B cell (primary cell): ENCODE measurements at regions of chr12 and their contacts with region 1.

Region 1: GRCh38 chr12:110280779-110281548 is at the start of gene ATP2A2:
- DNase-seq: peak; percentile 96
- ATAC-seq: peak; percentile 86
- H3K4me3 ChIP-seq: peak within 1 kb of the TSS; percentile 75 to 91 (median 88)
- H3K4me3 Mint-ChIP-seq: peak within 1 kb of the TSS; percentile 98
- H3K27ac ChIP-seq: peak within 1 kb of the TSS; percentile 63 to 84
- H3K27ac Mint-ChIP-seq: peak within 1 kb of the TSS; percentile 97
- H3K4me1 ChIP-seq: peaks cover 26 to 38% of the 10 kb centered on the region in 2 donors
- H3K4me1 Mint-ChIP-seq: peaks cover 45% of the 10 kb centered on the region
- H3K27me3 ChIP-seq: no peaks in the 10 kb centered on the region
- H3K27me3 Mint-ChIP-seq: no peaks in the 10 kb centered on the region
- CTCF ChIP-seq: peak; percentile 10
- total RNA-seq, gene ATP2A2: 68.2 and 73.1 TPM in 2 replicates

Region 2: GRCh38 chr12:109899783-109900751 is 380.9 kb before region 1 on chr12 and contains the start of gene TCHP:
- CTCF ChIA-PET with region 1: no interaction called
- POLR2A ChIA-PET with region 1: no interaction called
- intact Hi-C with region 1: loop called (anchors 5 kb)
- DNase-seq: peak; percentile 88
- ATAC-seq: peak; percentile 92
- H3K4me3 ChIP-seq: peak within 1 kb of the TSS; percentile 66 to 83 (median 70)
- H3K4me3 Mint-ChIP-seq: peak within 1 kb of the TSS; percentile 92
- H3K27ac ChIP-seq: peak within 1 kb of the TSS; percentile 49 to 74
- H3K27ac Mint-ChIP-seq: peak within 1 kb of the TSS; percentile 96
- H3K4me1 ChIP-seq: peaks cover 13 to 24% of the 10 kb centered on the region in 2 donors
- H3K4me1 Mint-ChIP-seq: peaks cover 22% of the 10 kb centered on the region
- H3K27me3 ChIP-seq: no peaks in the 10 kb centered on the region
- H3K27me3 Mint-ChIP-seq: no peaks in the 10 kb centered on the region
- CTCF ChIP-seq: no peak
- total RNA-seq, gene TCHP: 29.4 and 35.8 TPM in 2 replicates

Region 3: DNA sequence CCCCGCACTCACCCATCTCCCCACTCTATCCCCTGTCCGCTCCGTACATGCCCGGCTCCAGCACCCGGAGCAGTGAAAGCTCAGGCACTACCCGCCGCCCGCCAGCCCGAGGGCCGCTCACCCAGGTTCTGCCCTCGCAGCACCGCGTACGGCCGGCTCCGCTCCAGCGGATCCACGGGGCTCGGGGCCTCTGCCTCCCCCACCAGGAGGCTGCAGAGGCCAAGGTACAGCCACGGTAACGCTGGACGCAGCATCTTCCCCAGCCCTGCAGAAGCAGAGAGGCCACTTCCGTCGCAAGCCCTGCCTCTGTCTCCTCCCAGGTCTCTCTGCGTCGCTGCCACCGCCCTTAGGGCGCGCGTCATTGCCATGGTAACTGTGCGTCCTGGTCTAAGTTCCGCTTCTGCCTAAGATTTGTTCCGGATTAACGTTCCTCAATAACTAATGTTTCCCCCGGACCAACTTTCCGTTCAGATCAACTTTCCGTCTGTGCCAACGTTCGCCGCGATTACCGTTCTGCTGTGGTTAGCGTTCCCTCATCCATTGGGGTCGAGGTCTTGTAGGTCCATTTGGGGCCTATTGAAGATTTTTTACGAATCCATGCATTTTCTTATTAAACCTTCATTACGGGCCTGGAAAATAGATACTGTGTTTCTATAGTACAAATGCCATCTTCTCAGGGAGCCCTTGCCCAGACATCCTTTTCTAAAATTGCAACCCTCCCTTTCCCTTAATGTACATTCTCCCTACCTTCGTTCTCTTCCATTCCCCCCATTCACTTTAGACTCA is 232.5 kb before region 1 on chr12 and contains the start of gene C12orf76:
- CTCF ChIA-PET with region 1: no interaction called
- POLR2A ChIA-PET with region 1: no interaction called
- intact Hi-C with region 1: loop called (anchors 1 kb)
- DNase-seq: peak; percentile 96
- ATAC-seq: peak; percentile 98
- H3K4me3 ChIP-seq: peak within 1 kb of the TSS; percentile 66 to 95 (median 74)
- H3K4me3 Mint-ChIP-seq: peak within 1 kb of the TSS; percentile 91
- H3K27ac ChIP-seq: peak within 1 kb of the TSS; percentile 86 to 89
- H3K27ac Mint-ChIP-seq: peak within 1 kb of the TSS; percentile 98
- H3K4me1 ChIP-seq: peaks cover 23 to 44% of the 10 kb centered on the region in 2 donors
- H3K4me1 Mint-ChIP-seq: peaks cover 44% of the 10 kb centered on the region
- H3K27me3 ChIP-seq: no peaks in the 10 kb centered on the region
- H3K27me3 Mint-ChIP-seq: no peaks in the 10 kb centered on the region
- CTCF ChIP-seq: no peak
- total RNA-seq, gene C12orf76: 26.2 and 28.5 TPM in 2 replicates

Region 4: GRCh38 chr12:110124184-110124995 is 156.6 kb before region 1 on chr12 and contains the start of gene IFT81:
- CTCF ChIA-PET with region 1: interaction called, 6 read pairs
- POLR2A ChIA-PET with region 1: no interaction called
- intact Hi-C with region 1: loop called (anchors 1 kb)
- DNase-seq: peak; percentile 96
- ATAC-seq: peak; percentile 94
- H3K4me3 ChIP-seq: peak within 1 kb of the TSS; percentile 75 to 98 (median 96)
- H3K4me3 Mint-ChIP-seq: peak within 1 kb of the TSS; percentile 94
- H3K27ac ChIP-seq: peak within 1 kb of the TSS; percentile 25 to 92
- H3K27ac Mint-ChIP-seq: peak within 1 kb of the TSS; percentile 92
- H3K4me1 ChIP-seq: peaks cover 7 to 8% of the 10 kb centered on the region in 2 donors
- H3K4me1 Mint-ChIP-seq: peaks cover 9% of the 10 kb centered on the region
- H3K27me3 ChIP-seq: no peaks in the 10 kb centered on the region
- H3K27me3 Mint-ChIP-seq: no peaks in the 10 kb centered on the region
- CTCF ChIP-seq: no peak
- total RNA-seq, gene IFT81: 6.0 and 6.8 TPM in 2 replicates

Region 5: GRCh38 chr12:110134691-110135411 is 146.1 kb before region 1 on chr12:
- CTCF ChIA-PET with region 1: no interaction called
- POLR2A ChIA-PET with region 1: no interaction called
- intact Hi-C with region 1: no loop called
- DNase-seq: peak; percentile 33
- ATAC-seq: peak; percentile 73
- H3K4me3 ChIP-seq: no peak overlapping the region
- H3K4me3 Mint-ChIP-seq: no peak overlapping the region
- H3K27ac ChIP-seq: peak overlapping the region in 1 of 2 donors; percentile 28
- H3K27ac Mint-ChIP-seq: peak overlapping the region; percentile 32
- H3K4me1 ChIP-seq: peaks cover 4 to 6% of the 10 kb centered on the region in 2 donors
- H3K4me1 Mint-ChIP-seq: peaks cover 13% of the 10 kb centered on the region
- H3K27me3 ChIP-seq: no peaks in the 10 kb centered on the region
- H3K27me3 Mint-ChIP-seq: no peaks in the 10 kb centered on the region
- CTCF ChIP-seq: no peak

Region 6: GRCh38 chr12:110245369-110245772 is 35.6 kb before region 1 on chr12:
- CTCF ChIA-PET with region 1: no interaction called
- POLR2A ChIA-PET with region 1: no interaction called
- intact Hi-C with region 1: no loop called
- DNase-seq: peak; percentile 59
- ATAC-seq: peak; percentile 65
- H3K4me3 ChIP-seq: no peak overlapping the region
- H3K4me3 Mint-ChIP-seq: no peak overlapping the region
- H3K27ac ChIP-seq: no peak overlapping the region
- H3K27ac Mint-ChIP-seq: no peak overlapping the region
- H3K4me1 ChIP-seq: peaks cover 0 to 5% of the 10 kb centered on the region in 2 donors
- H3K4me1 Mint-ChIP-seq: peaks cover 7% of the 10 kb centered on the region
- H3K27me3 ChIP-seq: no peaks in the 10 kb centered on the region
- H3K27me3 Mint-ChIP-seq: peaks cover 9% of the 10 kb centered on the region
- CTCF ChIP-seq: peak; percentile 65

Region 7: GRCh38 chr12:110501752-110502738 is 221.1 kb after region 1 on chr12 and contains the starts of genes RAD9B and VPS29:
- CTCF ChIA-PET with region 1: no interaction called
- POLR2A ChIA-PET with region 1: no interaction called
- intact Hi-C with region 1: loop called (anchors 5 kb)
- DNase-seq: peak; percentile 99
- ATAC-seq: peak; percentile 94
- H3K4me3 ChIP-seq: peak within 1 kb of the TSS; percentile 90 to 99 (median 95)
- H3K4me3 Mint-ChIP-seq: peak within 1 kb of the TSS; percentile 93
- H3K27ac ChIP-seq: peak within 1 kb of the TSS; percentile 85 to 90
- H3K27ac Mint-ChIP-seq: peak within 1 kb of the TSS; percentile 96
- H3K4me1 ChIP-seq: peaks cover 19 to 20% of the 10 kb centered on the region in 2 donors
- H3K4me1 Mint-ChIP-seq: peaks cover 29% of the 10 kb centered on the region
- H3K27me3 ChIP-seq: no peaks in the 10 kb centered on the region
- H3K27me3 Mint-ChIP-seq: no peaks in the 10 kb centered on the region
- CTCF ChIP-seq: no peak
- total RNA-seq, gene RAD9B: 1.5 and 1.7 TPM in 2 replicates
- total RNA-seq, gene VPS29: 117 and 118 TPM in 2 replicates